ENCODE measurements at regions of chr11 and their contacts with region 1.

Region 1: GRCh38 chr11:3091791-3092602 is 34.8 kb upstream of the CARS1 start:
- DNase-seq: peak; percentile 82
- H3K4me3 Mint-ChIP-seq: no peak overlapping the region
- H3K27ac Mint-ChIP-seq: no peak overlapping the region
- H3K4me1 Mint-ChIP-seq: peaks cover 4% of the 10 kb centered on the region
- H3K27me3 Mint-ChIP-seq: peaks cover 9% of the 10 kb centered on the region

Region 2: DNA sequence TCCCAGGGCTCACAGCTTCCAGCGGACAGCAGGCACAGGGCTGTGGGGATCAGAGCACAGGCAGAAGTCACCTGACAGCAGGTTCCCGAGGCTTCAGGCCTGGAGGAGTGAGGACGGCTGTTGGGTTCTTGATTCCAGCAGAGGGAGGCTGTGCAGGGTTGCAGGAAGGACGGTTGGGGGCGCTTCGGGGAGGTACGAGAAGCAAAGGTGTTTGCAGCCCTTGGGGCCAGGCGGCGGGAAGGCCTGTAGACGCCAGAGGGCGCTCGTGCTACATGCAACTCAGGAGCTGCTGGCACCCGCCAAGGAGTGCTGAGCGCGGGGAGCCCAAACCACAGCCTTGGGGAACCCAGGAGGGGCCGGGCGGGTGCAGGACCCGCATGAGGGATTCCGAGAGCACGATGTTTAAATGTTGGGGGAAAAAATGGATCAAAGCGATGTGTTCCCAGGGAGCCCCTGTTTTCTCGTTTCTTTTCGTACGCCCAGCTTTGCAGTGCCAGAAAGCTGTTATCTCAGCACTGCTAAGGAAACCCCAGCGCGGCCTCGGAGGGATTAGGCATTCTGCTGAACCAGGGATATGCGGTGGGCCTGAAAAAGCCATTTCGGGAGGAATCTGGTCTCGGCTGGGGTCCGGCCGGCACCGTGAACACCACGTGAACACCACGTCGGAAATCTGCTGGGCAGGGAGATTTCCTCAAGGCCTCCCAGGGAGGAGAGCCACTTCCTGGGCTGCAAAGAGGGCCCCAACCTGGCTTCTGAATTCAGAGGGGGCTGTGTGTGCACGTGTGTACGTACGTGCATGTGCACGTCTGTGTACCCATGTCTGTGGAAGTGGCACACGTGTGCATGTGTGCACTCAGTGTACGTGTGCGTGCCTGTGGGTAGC is 559.1 kb before region 1 on chr11:
- CTCF ChIA-PET with region 1: interaction called, 15 read pairs
- POLR2A ChIA-PET with region 1: no interaction called
- DNase-seq: peak; percentile 90
- H3K4me3 Mint-ChIP-seq: peak overlapping the region; percentile 49
- H3K27ac Mint-ChIP-seq: no peak overlapping the region
- H3K4me1 Mint-ChIP-seq: peaks cover 13% of the 10 kb centered on the region
- H3K27me3 Mint-ChIP-seq: no peaks in the 10 kb centered on the region

Region 3: DNA sequence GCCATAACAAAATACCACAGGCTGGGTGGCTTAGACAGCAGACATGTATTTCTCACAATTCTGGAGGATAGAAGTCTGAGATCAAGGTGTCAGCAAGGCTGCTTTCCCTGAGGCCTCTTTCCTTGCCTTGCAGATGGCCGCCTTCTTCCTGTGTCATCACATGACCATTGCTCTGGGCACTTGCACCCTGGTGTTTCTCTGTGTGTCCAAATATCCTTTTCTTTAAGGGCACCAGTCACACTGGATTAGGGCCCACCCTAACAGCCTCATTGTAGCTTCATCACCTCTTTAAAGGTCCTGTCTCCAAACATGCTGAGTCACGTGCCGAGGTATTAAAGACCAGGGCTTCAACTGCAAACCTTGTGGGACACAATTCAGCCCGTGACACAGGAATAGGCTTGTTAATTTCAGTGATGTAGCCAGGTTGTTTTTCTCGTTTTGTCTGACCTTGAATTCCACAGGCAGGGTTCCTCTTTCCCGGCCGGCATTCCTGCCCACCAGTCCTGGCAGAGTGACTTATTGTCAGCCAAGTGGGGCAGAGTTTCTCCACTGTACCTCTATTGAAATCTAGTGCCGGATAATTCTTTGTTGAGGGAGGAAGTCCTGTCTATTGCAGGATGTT is 492.3 kb before region 1 on chr11:
- CTCF ChIA-PET with region 1: no interaction called
- POLR2A ChIA-PET with region 1: no interaction called
- DNase-seq: no peak
- H3K4me3 Mint-ChIP-seq: no peak overlapping the region
- H3K27ac Mint-ChIP-seq: no peak overlapping the region
- H3K4me1 Mint-ChIP-seq: no peaks in the 10 kb centered on the region
- H3K27me3 Mint-ChIP-seq: no peaks in the 10 kb centered on the region

Region 4: GRCh38 chr11:2892215-2893020 is 199.6 kb before region 1 on chr11:
- CTCF ChIA-PET with region 1: interaction called, 13 read pairs
- POLR2A ChIA-PET with region 1: interaction called, 3 read pairs
- DNase-seq: peak; percentile 76
- H3K4me3 Mint-ChIP-seq: peak overlapping the region; percentile 79
- H3K27ac Mint-ChIP-seq: peak overlapping the region; percentile 80
- H3K4me1 Mint-ChIP-seq: peaks cover 23% of the 10 kb centered on the region
- H3K27me3 Mint-ChIP-seq: peaks cover 3% of the 10 kb centered on the region

Region 5: GRCh38 chr11:3037040-3037944 is 54.7 kb before region 1 on chr11:
- CTCF ChIA-PET with region 1: interaction called, 80 read pairs
- POLR2A ChIA-PET with region 1: interaction called, 5 read pairs
- DNase-seq: peak; percentile 68
- H3K4me3 Mint-ChIP-seq: no peak overlapping the region
- H3K27ac Mint-ChIP-seq: peak overlapping the region; percentile 55
- H3K4me1 Mint-ChIP-seq: peaks cover 47% of the 10 kb centered on the region
- H3K27me3 Mint-ChIP-seq: no peaks in the 10 kb centered on the region

Region 6: DNA sequence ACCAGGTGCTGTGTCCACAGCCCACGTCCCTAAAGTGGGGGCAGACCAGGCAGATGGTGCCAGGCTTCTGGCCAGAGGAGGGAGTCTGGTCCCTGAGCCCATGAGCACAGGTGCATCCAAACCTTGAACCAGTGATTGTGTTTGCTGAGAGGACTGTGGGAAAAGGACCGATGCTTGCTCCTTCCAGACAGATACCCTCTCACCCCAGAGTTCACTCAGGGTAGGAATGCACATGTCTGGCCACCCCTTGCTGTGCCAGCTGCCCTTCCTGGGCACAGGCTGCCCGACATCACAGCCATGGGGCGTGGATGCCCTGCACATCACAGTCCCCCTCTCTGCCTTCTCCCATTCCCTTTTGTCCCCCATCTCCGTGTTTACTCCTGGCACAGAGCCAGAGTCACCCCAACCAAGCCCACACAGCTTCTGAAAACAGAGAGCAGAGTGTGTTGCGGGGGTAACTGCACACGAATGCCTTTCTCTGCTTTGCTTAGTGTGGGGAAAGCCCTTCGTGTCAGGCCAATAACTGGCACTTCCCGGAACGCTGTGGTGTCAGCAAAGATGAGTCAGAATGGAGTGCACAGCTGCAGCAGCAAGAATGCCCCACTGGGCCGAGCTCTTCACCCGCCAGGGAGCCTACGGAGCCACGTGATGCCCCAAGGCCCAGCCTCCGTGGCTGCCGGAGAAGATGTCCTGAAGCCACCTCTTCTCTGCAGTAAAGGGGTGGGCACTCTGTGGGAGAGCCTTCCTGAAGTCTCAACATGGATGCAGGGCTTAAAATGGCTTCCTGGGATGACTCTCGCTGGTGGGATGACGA is 42.4 kb before region 1 on chr11:
- CTCF ChIA-PET with region 1: interaction called, 22 read pairs
- POLR2A ChIA-PET with region 1: interaction called, 11 read pairs
- DNase-seq: peak; percentile 88
- H3K4me3 Mint-ChIP-seq: peak overlapping the region; percentile 61
- H3K27ac Mint-ChIP-seq: peak overlapping the region; percentile 95
- H3K4me1 Mint-ChIP-seq: peaks cover 49% of the 10 kb centered on the region
- H3K27me3 Mint-ChIP-seq: no peaks in the 10 kb centered on the region

Region 7: GRCh38 chr11:3080104-3080503 is 11.9 kb before region 1 on chr11:
- CTCF ChIA-PET with region 1: interaction called, 11 read pairs
- POLR2A ChIA-PET with region 1: no interaction called
- DNase-seq: no peak
- H3K4me3 Mint-ChIP-seq: no peak overlapping the region
- H3K27ac Mint-ChIP-seq: no peak overlapping the region
- H3K4me1 Mint-ChIP-seq: no peaks in the 10 kb centered on the region
- H3K27me3 Mint-ChIP-seq: peaks cover 19% of the 10 kb centered on the region

Measured in activated CD4-positive, alpha-beta memory T cell treated with anti-CD3 and anti-CD28 coated beads, Interleukin-2, amount 10 ng/mL, durations not matched to agents 7 days and 5 days (primary cell).